CD4-positive, alpha-beta T cell (primary cell): ENCODE measurements at regions of chr4 and their contacts with region 1.

Region 1: GRCh38 chr4:107913281-107913899 is 18.0 kb upstream of the CYP2U1 start:
- DNase-seq: peak in 8 of 14 experiments; percentile 1 to 78 (median 32)
- ATAC-seq: peak; percentile 92
- H3K4me3 ChIP-seq: no peak overlapping the region
- H3K4me3 Mint-ChIP-seq: no peak overlapping the region
- H3K27ac ChIP-seq: no peak overlapping the region
- H3K27ac Mint-ChIP-seq: no peak overlapping the region
- H3K4me1 ChIP-seq: no peaks in the 10 kb centered on the region
- H3K4me1 Mint-ChIP-seq: no peaks in the 10 kb centered on the region
- H3K27me3 ChIP-seq: no peaks in the 10 kb centered on the region
- H3K27me3 Mint-ChIP-seq: no peaks in the 10 kb centered on the region
- CTCF ChIP-seq: peak; percentile 86

Region 2: GRCh38 chr4:107757864-107758476 is 155.4 kb before region 1 on chr4:
- CTCF ChIA-PET with region 1: no interaction called
- POLR2A ChIA-PET with region 1: no interaction called
- intact Hi-C with region 1: loop called (anchors 1 kb)
- DNase-seq: peak in 3 of 14 experiments; percentile 25 to 42 (median 32)
- ATAC-seq: no peak
- H3K4me3 ChIP-seq: no peak overlapping the region
- H3K4me3 Mint-ChIP-seq: no peak overlapping the region
- H3K27ac ChIP-seq: no peak overlapping the region
- H3K27ac Mint-ChIP-seq: no peak overlapping the region
- H3K4me1 ChIP-seq: no peaks in the 10 kb centered on the region
- H3K4me1 Mint-ChIP-seq: no peaks in the 10 kb centered on the region
- H3K27me3 ChIP-seq: peaks cover 0 to 7% of the 10 kb centered on the region in 2 experiments
- H3K27me3 Mint-ChIP-seq: peaks cover 13% of the 10 kb centered on the region
- CTCF ChIP-seq: peak; percentile 80